PC-9 (cell line): ENCODE measurements at regions of chr5 and their contacts with region 1.

Region 1: DNA sequence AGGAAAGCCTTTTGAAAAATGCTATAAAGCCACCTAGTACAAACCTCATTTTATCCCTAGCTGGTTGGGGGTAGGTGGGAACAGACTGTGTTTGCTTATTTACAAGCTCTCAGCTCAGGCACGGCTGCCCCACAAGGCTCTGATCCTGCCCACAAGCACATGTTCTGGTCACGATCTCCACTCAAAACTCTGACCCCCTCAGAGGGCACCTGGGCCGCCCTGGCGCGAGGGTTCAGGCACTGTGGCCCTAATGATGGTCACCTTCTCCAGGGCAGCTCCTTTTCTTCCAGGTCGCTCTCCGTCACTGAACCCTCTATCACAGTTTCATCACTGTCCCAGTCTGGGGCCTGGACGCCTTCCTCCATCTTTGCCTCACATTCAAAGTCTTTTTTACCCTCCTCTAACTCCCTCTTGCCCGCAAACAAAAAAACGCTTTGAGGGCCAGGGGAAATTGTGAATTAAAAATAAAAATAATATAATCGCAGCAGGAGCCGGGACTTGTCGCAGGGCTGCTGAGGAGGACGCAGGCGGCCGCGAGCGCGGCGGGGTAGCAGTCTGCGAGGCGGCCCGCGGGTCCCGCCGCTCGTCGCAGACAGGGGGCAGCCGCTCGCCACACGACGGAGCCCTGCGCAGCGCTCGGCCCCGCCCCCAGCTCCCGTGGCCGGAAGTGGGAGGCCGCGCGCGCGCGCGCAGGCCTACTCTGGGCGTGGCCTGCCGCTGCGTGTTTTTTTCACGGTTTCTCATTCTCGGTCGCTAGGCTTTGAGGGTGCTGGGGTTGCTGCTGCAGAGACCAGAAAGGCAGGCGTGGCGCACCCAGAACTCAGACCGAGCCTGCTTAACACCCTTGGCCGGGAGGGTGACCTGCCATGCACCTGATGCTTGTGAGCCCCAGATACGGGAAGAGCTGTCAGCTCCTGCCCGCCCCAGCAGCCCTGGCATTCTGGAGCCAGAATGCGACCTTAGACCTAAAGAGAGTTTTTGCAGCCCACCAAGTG is at the start of gene ANKRD31:
- DNase-seq: peak; percentile 52 to 84
- H3K4me3 ChIP-seq: peak within 1 kb of the TSS; percentile 94
- H3K27ac ChIP-seq: peak within 1 kb of the TSS; percentile 43
- H3K4me1 ChIP-seq: peaks cover 33% of the 10 kb centered on the region
- H3K27me3 ChIP-seq: no peaks in the 10 kb centered on the region
- CTCF ChIP-seq: no peak; the same call in none of the 2 replicates
- total RNA-seq, gene ANKRD31: 0.23 and 0.48 TPM in 2 replicates

Region 2: GRCh38 chr5:74927336-74927735 is 309.3 kb before region 1 on chr5:
- CTCF ChIA-PET with region 1: interaction called, 15 read pairs
- POLR2A ChIA-PET with region 1: no interaction called
- intact Hi-C with region 1: loop called (anchors 10 kb)
- DNase-seq: no peak
- H3K4me3 ChIP-seq: no peak overlapping the region
- H3K27ac ChIP-seq: no peak overlapping the region
- H3K4me1 ChIP-seq: no peaks in the 10 kb centered on the region
- H3K27me3 ChIP-seq: no peaks in the 10 kb centered on the region
- CTCF ChIP-seq: no peak

Region 3: GRCh38 chr5:75113354-75113753 is 123.3 kb before region 1 on chr5:
- CTCF ChIA-PET with region 1: no interaction called
- POLR2A ChIA-PET with region 1: no interaction called
- intact Hi-C with region 1: loop called (anchors 5 kb)
- DNase-seq: peak in 1 of 2 experiments; percentile 70
- H3K4me3 ChIP-seq: no peak overlapping the region
- H3K27ac ChIP-seq: no peak overlapping the region
- H3K4me1 ChIP-seq: peaks cover 28% of the 10 kb centered on the region
- H3K27me3 ChIP-seq: no peaks in the 10 kb centered on the region
- CTCF ChIP-seq: no peak

Region 4: GRCh38 chr5:75373862-75374261 is 137.2 kb after region 1 on chr5:
- CTCF ChIA-PET with region 1: no interaction called
- POLR2A ChIA-PET with region 1: no interaction called
- intact Hi-C with region 1: no loop called
- DNase-seq: no peak
- H3K4me3 ChIP-seq: no peak overlapping the region
- H3K27ac ChIP-seq: no peak overlapping the region
- H3K4me1 ChIP-seq: no peaks in the 10 kb centered on the region
- H3K27me3 ChIP-seq: no peaks in the 10 kb centered on the region
- CTCF ChIP-seq: no peak

Region 5: DNA sequence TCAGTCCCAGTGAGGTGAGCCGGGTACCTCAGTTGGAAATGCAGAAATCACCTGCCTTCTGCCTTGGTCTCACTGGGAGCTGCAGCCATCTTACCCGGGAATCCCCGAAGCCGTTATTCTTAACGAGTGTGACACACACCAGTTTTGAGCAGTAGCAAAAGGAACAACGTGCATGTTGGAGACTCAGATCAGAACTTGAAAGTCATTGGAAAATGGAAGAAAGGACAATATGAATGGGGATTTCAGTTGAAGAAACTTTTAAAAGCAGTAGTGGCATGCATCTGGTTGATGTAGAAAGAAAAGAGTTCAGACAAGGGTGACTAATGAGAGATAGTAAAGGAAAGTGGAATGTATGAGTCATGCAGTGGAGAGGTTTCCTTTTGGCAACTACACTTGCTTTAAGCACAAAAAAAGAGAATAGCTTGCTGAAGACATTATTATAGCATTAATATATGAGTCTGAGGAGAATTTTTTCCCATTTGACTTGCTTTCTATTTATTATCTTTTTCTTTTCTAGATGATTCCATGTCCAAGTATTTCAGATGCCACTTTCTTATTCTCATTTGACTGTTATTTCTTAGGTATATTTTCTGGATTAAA is 330.2 kb after region 1 on chr5:
- CTCF ChIA-PET with region 1: no interaction called
- POLR2A ChIA-PET with region 1: no interaction called
- intact Hi-C with region 1: no loop called
- DNase-seq: peak; percentile 22 to 78
- H3K4me3 ChIP-seq: peak overlapping the region; percentile 16; the same call in 1 of the 2 replicates
- H3K27ac ChIP-seq: peak overlapping the region; percentile 24; the same call in 1 of the 2 replicates
- H3K4me1 ChIP-seq: peaks cover 21% of the 10 kb centered on the region
- H3K27me3 ChIP-seq: no peaks in the 10 kb centered on the region
- CTCF ChIP-seq: no peak